H1 (cell line): ENCODE measurements at regions of chr14 and their contacts with region 1.

Region 1: DNA sequence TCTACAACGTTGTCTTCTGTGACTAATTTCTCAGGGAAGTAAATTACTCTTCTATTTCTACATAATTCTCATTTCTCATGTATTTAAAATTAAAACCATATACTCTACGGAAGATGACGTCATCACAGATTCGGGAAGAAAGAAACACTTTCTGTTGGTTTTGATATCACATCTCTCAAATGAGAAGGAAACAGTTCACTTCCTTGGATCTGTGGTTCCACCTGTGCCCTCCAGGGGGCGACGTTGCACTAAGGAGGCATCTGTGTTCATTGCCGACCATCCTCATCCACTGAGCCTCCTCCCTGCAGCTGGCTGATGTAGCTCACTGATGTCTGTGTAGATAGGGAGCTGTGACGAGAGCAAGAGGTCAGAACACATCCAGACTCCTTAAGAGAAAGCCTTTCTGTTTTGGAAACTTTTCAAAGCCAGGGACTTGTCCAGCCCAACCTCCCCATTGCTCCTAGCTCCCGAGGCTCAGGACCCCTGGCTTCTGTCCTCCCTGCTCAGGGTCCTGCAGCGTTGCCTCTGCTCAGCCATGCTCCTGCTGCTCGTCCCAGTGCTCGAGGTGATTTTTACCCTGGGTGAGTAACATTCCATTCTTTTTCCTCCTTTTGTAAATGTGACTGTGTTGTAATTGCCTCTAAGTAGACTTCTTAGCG is 172.7 kb upstream of the OR4E1 start:
- DNase-seq: peak in 1 of 2 experiments; percentile 90
- H3K4me3 ChIP-seq: no peak overlapping the region
- H3K27ac ChIP-seq: no peak overlapping the region
- H3K4me1 ChIP-seq: no peaks in the 10 kb centered on the region
- H3K27me3 ChIP-seq: no peaks in the 10 kb centered on the region; a peak in 2 of 7 replicates
- CTCF ChIP-seq: peak; percentile 58 to 85 (median 72)
- EP300 ChIP-seq: no peak
- POLR2A ChIP-seq: no peak
- RAD21 ChIP-seq: peak; percentile 42 to 51; a peak in 3 of 4 replicates

Region 2: GRCh38 chr14:21860172-21860571 is 13.8 kb after region 1 on chr14:
- CTCF ChIA-PET with region 1: interaction called, 62 read pairs
- POLR2A ChIA-PET with region 1: no interaction called
- DNase-seq: peak in 1 of 2 experiments; percentile 67
- H3K4me3 ChIP-seq: no peak overlapping the region
- H3K27ac ChIP-seq: no peak overlapping the region
- H3K4me1 ChIP-seq: no peaks in the 10 kb centered on the region
- H3K27me3 ChIP-seq: no peaks in the 10 kb centered on the region
- CTCF ChIP-seq: peak in 2 of 3 experiments; percentile 56 to 66; a peak in 3 of 4 replicates
- EP300 ChIP-seq: no peak
- POLR2A ChIP-seq: no peak
- RAD21 ChIP-seq: peak; percentile 33 to 50; a peak in 3 of 4 replicates